Left ventricle myocardium inferior (tissue), 1 donor: ENCODE measurements at regions of chr7 and their contacts with region 1.

Region 1: DNA sequence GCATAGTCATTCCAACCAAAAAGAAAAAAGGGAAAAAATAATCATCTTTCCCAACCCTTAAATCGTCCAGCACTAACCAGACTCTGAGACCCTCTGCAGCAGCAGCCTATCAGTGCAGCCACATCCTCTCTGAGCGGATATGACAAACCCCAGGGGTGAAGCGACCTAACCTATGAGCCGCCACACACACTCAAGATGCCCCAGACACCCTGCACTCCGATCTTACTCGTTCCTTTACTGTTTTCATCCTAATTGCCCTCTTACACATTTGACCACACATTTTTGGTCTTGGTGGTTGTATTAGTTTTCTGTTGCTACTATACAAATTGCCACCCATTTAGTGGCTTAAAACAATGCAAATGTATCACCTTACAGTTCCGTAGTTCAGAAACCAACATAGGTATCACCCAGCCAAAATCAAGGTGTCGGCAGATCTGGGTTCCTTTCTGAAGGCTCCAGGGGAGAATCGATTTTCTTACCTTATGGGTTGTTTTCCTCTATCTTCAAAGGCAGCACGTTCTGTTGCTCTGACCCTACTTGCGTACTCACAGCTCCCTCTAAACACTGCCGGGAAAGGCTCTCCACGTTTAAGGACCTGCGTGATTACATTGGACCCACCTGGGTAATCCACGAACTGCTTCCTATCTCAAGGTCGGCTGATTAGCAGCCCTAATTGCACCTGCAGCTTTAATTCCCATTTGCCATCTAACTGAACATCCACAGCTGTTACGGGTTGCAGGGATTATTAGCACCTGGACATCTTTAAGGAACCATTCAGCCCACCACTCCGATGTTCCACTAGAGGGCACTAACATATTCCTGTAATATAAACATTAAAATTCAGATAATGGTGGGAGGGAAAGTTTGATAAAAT is 37.3 kb upstream of the PRSS1 start:
- DNase-seq: no peak
- H3K4me3 ChIP-seq: no peak overlapping the region
- H3K27ac ChIP-seq: no peak overlapping the region
- H3K4me1 ChIP-seq: no peaks in the 10 kb centered on the region
- H3K27me3 ChIP-seq: peaks cover 34% of the 10 kb centered on the region
- CTCF ChIP-seq: peak; percentile 70

Region 2: GRCh38 chr7:142782922-142783900 is 71.2 kb after region 1 on chr7:
- intact Hi-C with region 1: loop called (anchors 5 kb)
- DNase-seq: peak; percentile 85
- H3K4me3 ChIP-seq: peak overlapping the region; percentile 59
- H3K27ac ChIP-seq: no peak overlapping the region
- H3K4me1 ChIP-seq: peaks cover 5% of the 10 kb centered on the region
- H3K27me3 ChIP-seq: peaks cover 48% of the 10 kb centered on the region
- CTCF ChIP-seq: peak; percentile 91